Heart right ventricle (tissue), 16 donors: ENCODE measurements at regions of chr7 and their contacts with region 1.

Region 1: DNA sequence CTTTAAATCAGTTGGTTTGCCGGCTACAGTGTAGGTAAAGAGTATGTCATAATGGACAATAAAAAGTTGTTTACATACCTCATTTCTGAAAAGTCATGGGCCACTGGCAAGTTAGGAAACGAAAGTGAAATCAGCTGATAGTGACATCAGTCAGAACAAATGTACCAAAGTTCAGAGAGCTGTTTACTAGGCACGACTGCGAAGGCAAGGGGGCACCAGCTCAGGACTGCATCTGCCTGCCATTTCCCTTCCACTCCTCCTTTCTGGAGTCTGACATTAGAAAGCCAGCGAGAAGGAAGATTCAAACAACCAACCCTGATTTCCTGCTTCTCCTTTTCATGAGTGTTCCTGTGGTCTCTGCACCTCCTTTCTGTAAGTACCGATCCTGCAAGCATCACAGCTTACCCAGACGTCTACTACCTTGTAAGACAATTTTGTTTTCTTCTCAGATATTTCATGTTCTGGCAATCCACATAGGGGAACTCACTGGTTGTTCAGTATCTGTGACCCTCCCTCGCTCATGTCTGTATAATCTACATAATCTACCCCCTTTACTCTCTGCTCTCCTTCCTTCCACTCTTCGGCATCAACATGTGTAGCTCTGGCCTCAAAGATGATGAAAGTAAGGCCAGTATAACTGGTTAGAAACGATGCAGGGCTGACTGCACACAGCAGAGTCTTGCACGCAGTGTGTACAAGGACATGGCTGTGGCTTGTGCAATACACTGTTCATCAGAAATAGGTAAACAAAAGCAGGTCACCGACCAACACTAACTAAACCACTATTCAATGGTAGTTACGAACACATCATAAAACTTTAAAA is at the start of gene TMEM140:
- DNase-seq: peak in 1 of 2 donors; percentile 57
- ATAC-seq: peak; percentile 73 to 88 (median 80)
- H3K4me3 ChIP-seq: peak within 1 kb of the TSS; percentile 30 to 69 (median 62)
- H3K27ac ChIP-seq: peak within 1 kb of the TSS; percentile 87 to 97 (median 94)
- H3K4me1 ChIP-seq: peaks cover 6 to 80% (median 62%) of the 10 kb centered on the region in 9 donors
- H3K27me3 ChIP-seq: no peaks in the 10 kb centered on the region
- CTCF ChIP-seq: peak in 2 of 9 donors; percentile 23 to 34
- total RNA-seq, gene TMEM140: 15.7 to 74.1 (median 26.2) TPM

Region 2: GRCh38 chr7:133290041-133290440 is 1858.1 kb before region 1 on chr7:
- intact Hi-C with region 1: no loop called
- DNase-seq: no peak
- ATAC-seq: no peak
- H3K4me3 ChIP-seq: no peak overlapping the region
- H3K27ac ChIP-seq: no peak overlapping the region
- H3K4me1 ChIP-seq: peaks cover 0 to 16% (median 0%) of the 10 kb centered on the region in 9 donors
- H3K27me3 ChIP-seq: no peaks in the 10 kb centered on the region
- CTCF ChIP-seq: no peak

Region 3: DNA sequence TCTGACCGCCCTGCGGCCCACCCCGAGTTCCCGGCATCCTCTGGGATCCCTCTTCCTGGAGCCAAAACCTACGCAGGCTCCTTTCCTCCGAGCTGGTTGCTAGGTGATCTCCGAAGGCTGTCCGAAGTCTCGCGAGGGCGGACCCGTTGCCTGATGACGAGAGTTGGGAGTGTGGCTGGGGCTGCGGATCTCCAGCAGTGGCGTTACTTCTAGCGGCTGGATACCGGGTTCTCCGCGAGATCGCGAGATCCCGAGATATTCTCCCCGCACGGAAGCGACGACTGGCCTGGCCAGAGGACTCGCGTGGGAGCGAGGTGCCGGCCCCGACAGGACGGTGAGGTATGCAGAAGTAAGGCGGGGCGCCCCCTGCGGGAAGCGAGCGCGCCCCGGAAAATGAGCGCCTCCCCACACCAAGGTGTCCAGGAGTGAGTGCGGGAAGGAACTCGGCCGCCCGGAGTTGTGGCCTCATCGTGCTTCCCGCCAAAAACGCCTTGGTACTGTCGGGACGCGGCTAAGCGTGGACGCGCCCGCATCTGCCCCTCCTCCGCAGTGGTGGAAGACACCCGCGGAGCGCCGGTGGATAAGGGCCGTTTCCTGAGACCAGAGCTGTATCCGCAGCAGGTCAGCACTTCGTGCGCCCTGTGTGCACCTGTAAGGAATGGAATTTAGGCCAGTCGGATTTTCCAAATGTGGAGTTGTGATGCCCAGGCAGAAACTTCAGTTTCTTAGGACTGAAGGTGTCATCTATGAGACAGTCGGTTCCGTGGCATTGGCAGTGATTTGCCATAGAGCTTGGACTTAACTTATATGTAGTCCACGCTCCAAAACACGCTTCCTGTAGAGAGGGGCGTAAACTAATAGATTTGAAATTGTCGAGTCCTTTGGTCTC is 161.5 kb before region 1 on chr7 and contains the start of gene AGBL3:
- intact Hi-C with region 1: loop called in 4 of 10 experiments (anchors 2 to 5 kb)
- DNase-seq: peak; percentile 98
- ATAC-seq: peak; percentile 99 to 100 (median 99)
- H3K4me3 ChIP-seq: peak within 1 kb of the TSS; percentile 68 to 89 (median 84)
- H3K27ac ChIP-seq: peak within 1 kb of the TSS; percentile 79 to 94 (median 90)
- H3K4me1 ChIP-seq: peaks cover 0 to 37% (median 15%) of the 10 kb centered on the region in 9 donors
- H3K27me3 ChIP-seq: no peaks in the 10 kb centered on the region
- CTCF ChIP-seq: peak; percentile 37 to 89 (median 70)
- total RNA-seq, gene AGBL3: 0.64 to 2.6 (median 1.3) TPM

Region 4: DNA sequence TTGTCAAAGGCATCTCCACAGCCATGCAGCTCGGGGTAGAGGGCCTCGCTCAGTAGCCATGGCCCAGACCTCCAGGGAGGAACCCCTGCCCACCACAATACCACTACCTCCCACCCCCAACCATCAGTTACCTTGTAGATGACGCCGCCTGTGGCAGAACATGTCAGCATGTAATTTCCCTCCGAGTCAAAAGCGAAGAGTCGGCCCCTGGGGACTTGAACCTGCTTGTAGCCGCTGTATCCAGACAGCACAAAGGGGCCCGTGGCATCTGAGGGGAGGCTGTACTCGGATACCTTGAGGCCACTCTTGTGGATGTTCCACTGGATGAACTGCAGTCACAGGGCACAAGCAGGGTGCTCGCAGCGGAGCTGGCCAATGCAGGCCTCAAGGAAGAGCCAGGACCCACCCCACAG is 38.7 kb after region 1 on chr7:
- intact Hi-C with region 1: no loop called
- DNase-seq: no peak
- ATAC-seq: peak in 1 of 8 donors; percentile 11
- H3K4me3 ChIP-seq: no peak overlapping the region
- H3K27ac ChIP-seq: no peak overlapping the region
- H3K4me1 ChIP-seq: peaks cover 0 to 14% (median 0%) of the 10 kb centered on the region in 9 donors
- H3K27me3 ChIP-seq: no peaks in the 10 kb centered on the region
- CTCF ChIP-seq: no peak